Psoas muscle (tissue), 8 donors: ENCODE measurements at regions of chr7 and their contacts with region 1.

Region 1: GRCh38 chr7:32891800-32892520 is 400 bp upstream of the KBTBD2 start:
- DNase-seq: peak; percentile 99
- ATAC-seq: peak; percentile 78 to 87 (median 85)
- H3K4me3 ChIP-seq: peak overlapping the region; percentile 92
- H3K27ac ChIP-seq: peak overlapping the region; percentile 98
- H3K4me1 ChIP-seq: peaks cover 36% of the 10 kb centered on the region
- H3K27me3 ChIP-seq: no peaks in the 10 kb centered on the region
- CTCF ChIP-seq: no peak

Region 2: DNA sequence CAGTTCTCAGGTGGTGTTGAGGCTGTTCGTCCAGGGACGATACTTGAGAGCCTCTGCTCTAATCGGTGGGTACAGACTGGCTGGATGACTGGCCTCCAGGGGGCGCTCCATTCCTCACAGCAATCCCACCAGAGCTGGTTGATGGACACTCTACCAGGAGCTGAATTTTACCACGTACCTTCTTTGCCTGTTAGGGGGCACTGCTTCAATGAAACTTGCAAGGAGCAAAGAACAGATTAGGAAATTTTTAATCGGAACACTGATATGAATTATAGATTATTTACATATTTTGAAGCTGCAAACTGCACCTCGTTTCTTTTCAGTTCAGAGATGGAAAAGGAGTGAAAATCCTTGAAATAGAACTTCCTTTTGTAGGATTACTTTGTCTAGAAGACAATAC is 45.3 kb before region 1 on chr7:
- intact Hi-C with region 1: loop called (anchors 5 to 10 kb)
- DNase-seq: peak; percentile 89 to 94
- ATAC-seq: peak; percentile 99 to 100 (median 100)
- H3K4me3 ChIP-seq: no peak overlapping the region
- H3K27ac ChIP-seq: no peak overlapping the region
- H3K4me1 ChIP-seq: no peaks in the 10 kb centered on the region
- H3K27me3 ChIP-seq: no peaks in the 10 kb centered on the region
- CTCF ChIP-seq: peak; percentile 95

Region 3: GRCh38 chr7:32942786-32943653 is 51.1 kb after region 1 on chr7:
- intact Hi-C with region 1: loop called in 1 of 2 experiments (anchors 5 kb)
- DNase-seq: peak; percentile 84 to 90
- ATAC-seq: peak; percentile 95 to 97 (median 96)
- H3K4me3 ChIP-seq: peak overlapping the region; percentile 78
- H3K27ac ChIP-seq: peak overlapping the region; percentile 93
- H3K4me1 ChIP-seq: peaks cover 12% of the 10 kb centered on the region
- H3K27me3 ChIP-seq: no peaks in the 10 kb centered on the region
- CTCF ChIP-seq: peak; percentile 70

Region 4: GRCh38 chr7:33062782-33063443 is 171.0 kb after region 1 on chr7:
- intact Hi-C with region 1: loop called in 1 of 2 experiments (anchors 5 kb)
- DNase-seq: peak; percentile 92 to 96
- ATAC-seq: peak; percentile 99
- H3K4me3 ChIP-seq: peak overlapping the region; percentile 96
- H3K27ac ChIP-seq: peak overlapping the region; percentile 96
- H3K4me1 ChIP-seq: peaks cover 16% of the 10 kb centered on the region
- H3K27me3 ChIP-seq: no peaks in the 10 kb centered on the region
- CTCF ChIP-seq: no peak